ENCODE measurements at regions of chr7 and their contacts with region 1.

Region 1: DNA sequence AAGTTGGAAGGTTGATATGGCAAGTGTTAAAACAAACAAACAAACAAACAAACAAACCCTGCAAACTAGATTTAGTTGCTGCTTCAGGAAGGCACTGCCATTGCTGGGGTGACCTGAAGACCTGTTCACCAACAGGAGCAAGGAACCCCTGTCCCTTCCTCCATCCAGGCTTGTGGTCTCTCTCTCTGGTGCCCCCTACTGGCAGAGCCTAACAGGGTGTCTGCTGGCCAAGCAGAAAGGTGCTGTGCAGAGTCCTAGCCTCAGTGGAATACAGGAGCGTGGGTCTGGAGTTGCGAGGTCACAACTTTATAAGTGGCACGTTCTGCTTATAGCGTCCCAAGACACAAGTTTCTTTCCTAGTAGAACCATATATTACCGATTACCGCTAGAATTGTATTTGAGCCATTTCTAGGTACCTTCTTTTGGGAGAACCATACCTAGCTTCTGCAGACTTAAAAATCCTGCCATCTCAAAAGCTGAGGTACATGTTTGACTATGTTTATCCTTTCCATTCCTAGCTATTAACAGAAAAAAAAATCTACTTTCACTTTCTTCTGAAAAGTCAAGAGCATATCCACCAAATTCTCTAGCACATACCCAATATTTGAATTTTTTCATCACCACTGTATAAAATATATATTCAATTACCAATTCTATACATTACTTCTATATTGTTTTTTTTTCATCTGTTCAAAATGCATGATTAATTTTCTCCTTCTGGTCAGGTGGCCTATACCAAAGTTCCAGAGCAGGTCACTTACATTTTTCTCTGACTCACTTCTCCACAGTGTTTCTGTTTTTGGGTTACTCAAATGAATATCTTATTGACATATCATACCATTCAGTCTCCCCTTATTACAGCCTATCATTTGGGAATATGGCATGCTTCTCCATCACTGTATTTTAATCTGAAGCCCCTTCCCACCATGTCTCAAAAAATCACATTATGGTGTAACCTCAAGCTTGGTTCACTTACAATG is 29.1 kb upstream of the CALD1 start:
- DNase-seq: peak; percentile 45 to 70 (median 56)
- ATAC-seq: peak; percentile 69 to 81
- H3K4me3 ChIP-seq: no peak overlapping the region
- H3K27ac ChIP-seq: no peak overlapping the region
- H3K4me1 ChIP-seq: no peaks in the 10 kb centered on the region
- H3K27me3 ChIP-seq: no peaks in the 10 kb centered on the region

Region 2: GRCh38 chr7:134845468-134845867 is 95.1 kb after region 1 on chr7:
- intact Hi-C with region 1: no loop called
- DNase-seq: no peak
- ATAC-seq: no peak
- H3K4me3 ChIP-seq: no peak overlapping the region
- H3K27ac ChIP-seq: no peak overlapping the region
- H3K4me1 ChIP-seq: peaks cover 13% of the 10 kb centered on the region
- H3K27me3 ChIP-seq: no peaks in the 10 kb centered on the region

Region 3: GRCh38 chr7:134954197-134955082 is 204.1 kb after region 1 on chr7:
- intact Hi-C with region 1: loop called in 1 of 4 experiments (anchors 10 kb)
- DNase-seq: no peak
- ATAC-seq: peak in 1 of 2 donors; percentile 38
- H3K4me3 ChIP-seq: no peak overlapping the region
- H3K27ac ChIP-seq: no peak overlapping the region
- H3K4me1 ChIP-seq: no peaks in the 10 kb centered on the region
- H3K27me3 ChIP-seq: no peaks in the 10 kb centered on the region